GM12878 (cell line): ENCODE measurements at regions of chr19 and their contacts with region 1.

Region 1: DNA sequence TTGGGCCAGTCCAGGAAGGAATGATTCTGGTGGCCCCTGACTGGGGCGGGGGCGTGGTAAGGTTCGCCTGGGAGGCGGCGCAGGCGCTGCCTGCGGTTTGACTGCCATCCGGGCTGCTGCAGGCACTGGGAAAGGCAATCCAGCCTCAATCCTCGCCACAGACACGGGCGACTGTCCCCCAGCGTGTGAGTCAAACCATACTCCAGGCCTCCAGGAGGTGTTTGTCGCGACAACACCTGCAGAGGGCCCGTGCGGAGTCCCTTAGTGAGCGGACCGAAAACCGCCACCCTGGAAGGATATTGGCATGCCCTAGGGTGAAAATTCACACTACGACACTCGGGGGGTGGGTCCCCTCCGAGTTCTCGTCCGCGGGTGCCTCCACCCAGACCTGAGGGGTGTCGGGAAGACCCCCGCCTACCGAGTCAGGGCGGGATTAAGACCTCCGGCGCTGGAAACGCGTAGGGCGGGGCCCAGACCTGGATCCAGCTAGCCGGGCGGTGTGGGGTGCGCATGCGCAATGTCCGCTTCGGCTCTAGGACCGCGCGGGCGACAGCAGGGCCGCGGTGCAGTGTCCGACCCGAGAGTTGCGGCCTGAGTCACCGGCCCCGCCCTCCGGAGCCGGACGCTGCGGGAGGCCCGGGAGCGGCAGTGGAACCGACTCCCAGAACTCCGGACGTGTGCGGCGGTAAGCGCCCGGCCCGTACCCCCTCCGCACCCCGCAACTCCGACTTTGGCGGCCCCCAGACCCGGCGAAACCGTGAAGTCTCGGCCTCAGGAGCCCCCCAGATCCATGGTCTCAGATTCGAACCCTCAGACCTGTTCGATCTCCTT is at the start of gene CAPNS1:
- DNase-seq: peak; percentile 88
- ATAC-seq: peak; percentile 88
- H3K4me3 ChIP-seq: peak within 1 kb of the TSS; percentile 96
- H3K27ac ChIP-seq: peak within 1 kb of the TSS; percentile 98
- H3K4me1 ChIP-seq: peaks cover 10% of the 10 kb centered on the region; the same call in 1 of the 2 replicates
- H3K27me3 ChIP-seq: no peaks in the 10 kb centered on the region
- CTCF ChIP-seq: 0 out of 6 replicates have a peak, but pooled peaks of 1 of the 3 experiments have one; percentile 11
- EP300 ChIP-seq: peak; percentile 36 to 41; a peak in 2 of 4 replicates
- POLR2A ChIP-seq: peak; percentile 80
- RAD21 ChIP-seq: no peak
- polyA plus RNA-seq, gene CAPNS1: 96.9 to 207 TPM

Region 2: DNA sequence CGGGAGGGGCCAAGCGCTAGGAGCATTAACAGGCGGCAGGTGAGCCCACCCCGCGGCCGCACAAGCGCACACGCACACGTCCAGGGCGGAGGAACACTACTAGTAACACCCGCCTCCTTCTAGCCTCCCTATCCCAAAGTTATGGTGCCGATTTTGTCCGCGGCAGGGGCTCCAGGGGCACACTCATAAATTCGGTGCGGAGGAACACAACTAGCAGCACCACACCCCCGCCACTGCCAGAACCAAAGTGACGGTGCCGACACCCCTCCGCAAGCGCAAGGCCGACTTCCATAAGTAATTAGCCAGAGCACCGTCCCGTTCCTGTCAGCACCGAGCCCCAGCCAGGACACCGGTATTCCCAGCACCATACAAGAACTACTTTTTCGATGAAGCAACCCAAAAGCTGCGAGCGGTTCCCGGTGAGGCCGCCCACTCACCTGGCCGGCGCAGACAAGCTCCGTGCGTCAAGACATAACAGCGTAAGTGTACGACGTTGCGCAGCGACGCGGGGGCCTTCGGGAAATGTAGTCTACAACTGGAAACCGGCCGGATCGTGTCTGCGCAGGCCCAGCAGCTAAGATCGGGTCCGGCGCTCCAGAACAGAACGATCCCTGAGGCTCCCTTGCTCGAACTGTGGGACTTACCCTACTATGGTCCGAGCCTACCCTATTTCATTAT is 1454.8 kb after region 1 on chr19 and contains the starts of genes ZNF540 and ZNF571:
- CTCF ChIA-PET with region 1: no interaction called
- POLR2A ChIA-PET with region 1: no interaction called
- RAD21 ChIA-PET with region 1: no interaction called
- SMC1A ChIA-PET with region 1: no interaction called
- in situ Hi-C with region 1: loop called (anchors 10 kb)
- intact Hi-C with region 1: no loop called
- DNase-seq: peak; percentile 73
- ATAC-seq: peak; percentile 100
- H3K4me3 ChIP-seq: peak within 1 kb of the TSS; percentile 72
- H3K27ac ChIP-seq: peak within 1 kb of the TSS; percentile 70
- H3K4me1 ChIP-seq: 0 out of 2 replicates have a peak, but pooled peaks cover 3% of the 10 kb centered on the region
- H3K27me3 ChIP-seq: no peaks in the 10 kb centered on the region
- CTCF ChIP-seq: no peak
- EP300 ChIP-seq: no peak
- POLR2A ChIP-seq: peak; percentile 47; the same call in 1 of the 2 replicates
- RAD21 ChIP-seq: no peak
- polyA plus RNA-seq, gene ZNF540: 0.60 to 1.3 TPM
- polyA plus RNA-seq, gene ZNF571: 0.27 to 0.92 TPM